Cardiac septum (tissue), 1 donor: ENCODE measurements at regions of chr15 and their contacts with region 1.

Region 1: DNA sequence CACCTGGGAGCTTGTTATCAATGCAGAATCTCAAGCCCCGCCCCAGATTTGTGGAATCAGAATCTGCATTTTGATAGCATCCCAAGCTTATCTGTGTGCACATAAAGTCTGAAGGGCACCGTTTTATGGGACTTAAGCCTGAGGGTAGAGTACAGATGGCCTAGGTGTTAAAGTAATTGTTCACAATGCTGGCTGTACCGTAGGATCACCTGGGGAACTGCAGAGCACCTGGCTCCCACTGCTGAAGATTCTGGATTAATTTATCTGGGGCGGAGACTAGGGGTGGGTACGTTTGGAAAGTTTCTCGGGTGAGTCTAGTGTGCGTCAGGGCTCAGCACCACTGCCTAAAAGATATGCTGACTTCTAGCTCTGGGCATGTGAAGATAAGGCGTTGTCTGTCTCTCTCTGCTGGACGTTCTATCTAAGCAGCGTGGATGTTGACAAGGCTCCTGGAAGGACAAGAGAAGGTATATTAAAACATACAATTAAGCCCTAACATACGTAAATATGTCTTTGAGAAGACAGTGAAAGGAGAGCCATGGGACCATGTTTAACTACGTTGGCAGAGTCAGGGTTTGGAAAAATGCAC is 63.2 kb upstream of the RASGRP1 start:
- DNase-seq: no peak

Region 2: GRCh38 chr15:38563723-38564519 is 63.9 kb before region 1 on chr15:
- intact Hi-C with region 1: loop called (anchors 2 kb)
- DNase-seq: peak; percentile 89